Gastrocnemius medialis (tissue), 4 donors: ENCODE measurements at regions of chr12 and their contacts with region 1.

Region 1: GRCh38 chr12:101773650-101774162 is 34.4 kb upstream of the SYCP3 start:
- DNase-seq: peak; percentile 30 to 55
- ATAC-seq: peak; percentile 81 to 86
- H3K4me3 ChIP-seq: no peak overlapping the region
- H3K27ac ChIP-seq: peak overlapping the region in 1 of 4 donors; percentile 3
- H3K4me1 ChIP-seq: peaks cover 12 to 22% of the 10 kb centered on the region in 2 donors
- H3K27me3 ChIP-seq: no peaks in the 10 kb centered on the region
- CTCF ChIP-seq: peak; percentile 89 to 94 (median 91)
- POLR2A ChIP-seq: no peak

Region 2: GRCh38 chr12:101839324-101840283 is 65.9 kb after region 1 on chr12:
- in situ Hi-C with region 1: loop called in 3 of 4 experiments (anchors 5 kb)
- intact Hi-C with region 1: loop called (anchors 1 kb)
- DNase-seq: peak; percentile 23 to 41
- ATAC-seq: peak; percentile 56 to 86
- H3K4me3 ChIP-seq: no peak overlapping the region
- H3K27ac ChIP-seq: no peak overlapping the region
- H3K4me1 ChIP-seq: peaks cover 0 to 3% of the 10 kb centered on the region in 2 donors
- H3K27me3 ChIP-seq: no peaks in the 10 kb centered on the region
- CTCF ChIP-seq: peak; percentile 73 to 90 (median 82)
- POLR2A ChIP-seq: no peak